Testis (tissue), 5 donors: ENCODE measurements at regions of chrX and their contacts with region 1.

Region 1: DNA sequence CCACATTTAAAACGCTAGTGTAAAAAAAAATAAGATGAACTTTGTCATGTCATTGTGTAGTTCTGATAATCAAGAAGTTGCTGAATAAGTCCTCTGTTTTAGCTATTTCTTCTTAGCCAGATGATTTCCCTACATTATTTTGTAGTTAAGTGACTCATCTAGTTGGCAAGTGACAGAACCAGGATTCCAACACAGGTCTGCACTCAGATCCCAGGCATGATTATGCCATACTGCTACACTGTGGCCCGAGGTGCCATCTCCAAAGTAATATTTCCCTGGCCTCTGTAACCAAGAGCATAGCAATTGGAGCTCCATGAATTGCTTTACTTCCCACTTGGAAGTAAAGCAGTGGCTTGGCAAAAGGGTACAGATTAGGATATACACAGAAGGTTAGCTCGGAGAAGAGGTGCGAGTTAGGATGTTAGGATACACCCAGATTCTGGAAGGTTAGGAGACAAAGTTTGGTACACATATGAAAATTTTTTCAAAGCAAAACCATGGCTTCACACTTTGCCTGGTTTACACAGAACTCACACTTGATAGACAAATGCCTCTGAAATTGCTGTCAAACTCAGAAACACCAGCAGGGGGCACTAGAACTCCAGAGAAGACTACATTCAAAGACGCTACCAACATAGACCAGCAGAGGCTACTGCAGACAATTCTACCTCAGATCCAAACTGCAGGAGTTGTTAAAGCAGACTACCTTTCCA is 41.4 kb downstream of the SRPX2 start:
- DNase-seq: peak; percentile 80
- H3K4me3 ChIP-seq: no peak overlapping the region
- H3K27ac ChIP-seq: no peak overlapping the region
- H3K4me1 ChIP-seq: no peaks in the 10 kb centered on the region
- H3K27me3 ChIP-seq: no peaks in the 10 kb centered on the region
- CTCF ChIP-seq: peak; percentile 71 to 92 (median 88)
- POLR2A ChIP-seq: no peak

Region 2: GRCh38 chrX:100768679-100769338 is 83.4 kb after region 1 on chrX:
- intact Hi-C with region 1: loop called (anchors 5 kb)
- DNase-seq: peak; percentile 95
- H3K4me3 ChIP-seq: no peak overlapping the region
- H3K27ac ChIP-seq: no peak overlapping the region
- H3K4me1 ChIP-seq: no peaks in the 10 kb centered on the region
- H3K27me3 ChIP-seq: no peaks in the 10 kb centered on the region
- CTCF ChIP-seq: peak; percentile 95 to 99 (median 99)
- POLR2A ChIP-seq: no peak